HEK293 (cell line): ENCODE measurements at regions of chr15 and their contacts with region 1.

Region 1: GRCh38 chr15:40307421-40308211 is at the start of gene PLCB2:
- H3K4me3 ChIP-seq: no peak within 1 kb of the TSS
- H3K27ac ChIP-seq: no peak within 1 kb of the TSS; the same call in 1 of the 2 replicates
- H3K4me1 ChIP-seq: no peaks in the 10 kb centered on the region
- CTCF ChIP-seq: peak; percentile 52

Region 2: DNA sequence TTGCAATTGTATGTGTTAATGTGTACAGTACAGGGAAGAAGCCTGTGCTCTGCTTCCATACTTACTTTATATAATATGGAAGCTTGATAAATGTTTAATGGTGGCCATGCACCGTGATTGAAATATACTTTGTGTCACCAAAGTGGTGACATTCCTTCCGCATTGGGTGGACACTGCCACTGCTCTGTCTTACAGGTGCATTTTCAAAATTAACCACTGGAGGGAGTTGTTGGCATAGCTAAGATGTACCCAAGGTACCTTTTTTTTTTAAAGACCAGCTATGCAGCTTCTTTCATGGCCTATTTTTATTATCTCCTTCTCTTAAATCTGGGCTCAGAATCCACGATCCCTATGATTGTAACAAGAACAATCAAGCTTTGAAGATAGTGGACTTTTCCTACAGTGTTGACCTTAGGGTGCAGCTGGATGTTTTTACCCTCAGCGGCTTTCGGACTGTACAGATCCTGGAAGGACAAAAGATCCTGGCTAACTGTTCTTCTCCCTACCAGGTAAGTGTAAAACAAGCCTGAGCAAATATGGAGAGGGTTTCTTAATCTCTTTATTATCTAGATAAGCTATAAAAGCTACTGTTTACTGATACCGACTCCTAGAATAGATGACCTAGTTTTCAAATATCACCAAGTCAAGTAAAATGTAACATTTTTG is 90.3 kb before region 1 on chr15:
- CTCF ChIA-PET with region 1: interaction called, 21 read pairs
- POLR2A ChIA-PET with region 1: no interaction called
- H3K4me3 ChIP-seq: no peak overlapping the region
- H3K27ac ChIP-seq: no peak overlapping the region
- H3K4me1 ChIP-seq: no peaks in the 10 kb centered on the region
- CTCF ChIP-seq: no peak

Region 3: DNA sequence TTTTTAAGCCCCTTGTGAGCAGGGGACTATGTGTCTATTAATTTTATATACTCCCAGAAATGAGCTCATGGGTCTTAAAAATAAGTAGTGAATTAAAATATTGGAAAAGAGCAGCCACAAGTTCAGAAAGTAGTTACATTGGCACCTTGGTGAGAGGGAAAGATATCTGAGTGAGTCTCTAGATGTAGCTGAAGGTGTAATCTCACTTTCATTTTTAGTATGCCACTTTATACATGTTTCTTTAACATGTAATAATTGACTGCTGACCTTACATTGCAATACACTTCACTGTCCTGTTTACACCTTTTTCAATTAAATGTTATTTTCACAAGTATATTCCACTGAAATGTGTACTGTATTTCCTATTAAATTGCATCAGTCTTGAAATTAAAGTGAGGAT is 80.9 kb before region 1 on chr15:
- CTCF ChIA-PET with region 1: interaction called, 13 read pairs
- POLR2A ChIA-PET with region 1: no interaction called
- H3K4me3 ChIP-seq: no peak overlapping the region
- H3K27ac ChIP-seq: no peak overlapping the region
- H3K4me1 ChIP-seq: no peaks in the 10 kb centered on the region
- CTCF ChIP-seq: no peak

Region 4: GRCh38 chr15:40249482-40250303 is 57.9 kb before region 1 on chr15:
- CTCF ChIA-PET with region 1: no interaction called
- POLR2A ChIA-PET with region 1: no interaction called
- H3K4me3 ChIP-seq: no peak overlapping the region
- H3K27ac ChIP-seq: peak overlapping the region; percentile 17; the same call in 1 of the 2 replicates
- H3K4me1 ChIP-seq: peaks cover 4% of the 10 kb centered on the region; the same call in 1 of the 2 replicates
- CTCF ChIP-seq: no peak

Region 5: GRCh38 chr15:40290918-40291574 is 16.6 kb before region 1 on chr15:
- CTCF ChIA-PET with region 1: interaction called, 12 read pairs
- POLR2A ChIA-PET with region 1: interaction called, 6 read pairs
- H3K4me3 ChIP-seq: no peak overlapping the region
- H3K27ac ChIP-seq: no peak overlapping the region; the same call in 1 of the 2 replicates
- H3K4me1 ChIP-seq: peaks cover 4% of the 10 kb centered on the region
- CTCF ChIP-seq: no peak

Region 6: GRCh38 chr15:40323239-40323952 is 15.8 kb after region 1 on chr15 and contains the start of gene INAFM2:
- CTCF ChIA-PET with region 1: interaction called, 22 read pairs
- POLR2A ChIA-PET with region 1: no interaction called
- H3K4me3 ChIP-seq: peak within 1 kb of the TSS; percentile 70
- H3K27ac ChIP-seq: peak within 1 kb of the TSS; percentile 81; the same call in 1 of the 2 replicates
- H3K4me1 ChIP-seq: peaks cover 13% of the 10 kb centered on the region; the same call in 1 of the 2 replicates
- CTCF ChIP-seq: peak; percentile 89

Region 7: GRCh38 chr15:40338041-40338657 is 30.5 kb after region 1 on chr15:
- CTCF ChIA-PET with region 1: interaction called, 35 read pairs
- POLR2A ChIA-PET with region 1: interaction called, 4 read pairs
- H3K4me3 ChIP-seq: no peak overlapping the region
- H3K27ac ChIP-seq: no peak overlapping the region
- H3K4me1 ChIP-seq: peaks cover 10% of the 10 kb centered on the region
- CTCF ChIP-seq: peak; percentile 84